GM18951 (cell line): ENCODE measurements at regions of chr3 and their contacts with region 1.

Region 1: GRCh38 chr3:70358978-70359580 is 46.6 kb upstream of the MDFIC2 start:
- POLR2A ChIP-seq: no peak

Region 2: DNA sequence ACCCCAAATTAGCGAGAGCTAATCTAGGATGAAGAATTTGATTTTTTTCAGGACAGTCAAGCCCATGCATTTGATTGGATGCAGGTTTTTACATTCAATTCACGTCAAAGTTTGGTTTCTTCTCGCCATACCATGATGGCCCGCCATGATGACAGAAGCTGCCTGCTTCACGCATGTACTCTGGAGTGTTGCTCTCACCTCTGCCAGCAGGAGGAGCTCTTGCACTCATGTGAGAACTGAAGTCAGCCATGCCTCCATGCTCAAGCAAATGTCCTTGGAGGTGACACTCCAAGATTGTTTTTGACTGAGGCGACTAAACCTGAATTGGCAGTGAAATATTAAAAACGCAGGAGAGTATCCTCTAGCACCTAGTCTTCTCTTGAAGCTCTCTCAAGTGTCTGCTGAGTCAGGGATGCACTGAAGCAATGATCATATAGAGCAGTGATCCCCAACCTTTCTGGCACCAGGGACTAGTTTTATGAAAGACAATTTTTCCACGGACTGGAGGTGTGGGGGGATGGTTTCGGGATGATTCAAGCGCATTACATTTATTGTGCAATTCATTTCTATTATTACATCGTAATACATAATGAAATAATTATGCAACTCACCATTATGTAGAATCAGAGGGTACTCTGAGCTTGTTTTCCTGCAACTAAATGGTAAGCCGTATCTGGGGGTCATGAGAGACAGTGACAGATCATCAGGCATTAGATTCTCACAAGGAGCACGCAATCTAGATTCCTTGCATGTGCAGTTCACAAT is 238.5 kb before region 1 on chr3:
- in situ Hi-C with region 1: loop called (anchors 25 kb)
- POLR2A ChIP-seq: no peak